Activated CD4-positive, alpha-beta T cell treated with anti-CD3 and anti-CD28 coated beads, Interleukin-2, amount 10 ng/mL, durations not matched to agents 24 days and 14 days (primary cell): ENCODE measurements at regions of chr12 and their contacts with region 1.

Region 1: DNA sequence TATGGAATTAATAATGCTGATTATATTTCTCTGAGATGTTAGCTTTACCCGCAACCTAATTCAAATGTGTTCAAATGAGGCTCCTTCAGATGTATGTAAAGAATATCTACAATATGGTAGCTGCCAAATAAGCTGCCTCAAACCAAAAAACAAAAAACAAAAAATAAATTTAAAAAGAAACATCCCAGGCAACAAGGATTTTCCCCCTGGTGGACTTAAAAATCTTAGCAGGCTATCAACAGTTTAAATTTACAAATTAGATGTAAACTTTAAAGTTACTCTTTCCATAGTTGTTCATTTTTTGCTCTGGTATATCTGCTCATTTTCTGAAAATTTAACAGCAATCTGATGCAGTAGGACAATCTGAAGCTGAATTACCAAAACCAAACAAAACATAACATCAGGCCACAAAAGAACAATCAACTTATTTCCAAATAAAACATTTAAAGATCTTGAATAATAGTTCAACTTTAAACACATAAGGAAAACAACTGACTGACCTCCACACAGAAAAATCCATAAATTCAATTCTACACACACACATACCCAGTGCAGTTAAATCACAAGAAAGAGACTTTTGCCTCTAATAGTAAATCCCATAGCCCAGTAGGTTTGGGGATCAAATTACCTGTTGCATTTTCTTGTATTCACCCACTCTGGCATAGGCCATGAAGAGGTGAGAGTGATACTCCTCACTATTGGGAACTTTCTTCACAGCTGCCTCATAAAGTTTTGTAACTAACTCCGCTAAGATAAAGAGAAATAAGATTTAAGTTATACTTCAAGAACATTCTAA is 21.3 kb downstream of the NAA25 start:
- DNase-seq: no peak
- H3K4me3 Mint-ChIP-seq: no peak overlapping the region
- H3K27ac Mint-ChIP-seq: no peak overlapping the region
- H3K4me1 Mint-ChIP-seq: peaks cover 21% of the 10 kb centered on the region
- H3K27me3 Mint-ChIP-seq: no peaks in the 10 kb centered on the region

Region 2: DNA sequence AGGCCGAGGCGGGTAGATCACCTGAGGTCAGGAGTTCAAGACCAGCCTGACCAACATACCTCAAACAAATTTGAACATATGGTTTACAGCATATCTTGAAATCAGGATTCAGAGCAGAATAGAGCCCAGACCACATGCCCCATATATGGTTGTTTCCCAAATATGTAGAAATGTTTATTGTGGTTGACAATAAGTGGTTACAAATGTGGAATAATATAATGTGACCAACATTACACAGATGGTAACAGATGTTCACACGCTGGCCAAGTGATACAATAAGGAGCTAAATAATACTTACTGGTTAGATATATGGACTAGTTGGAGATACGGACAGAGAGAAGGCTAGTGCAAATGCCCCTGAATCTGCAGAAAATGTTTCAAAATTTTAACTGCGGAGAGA is 159.9 kb before region 1 on chr12:
- intact Hi-C with region 1: no loop called
- DNase-seq: peak; percentile 22
- H3K4me3 Mint-ChIP-seq: no peak overlapping the region
- H3K27ac Mint-ChIP-seq: no peak overlapping the region
- H3K4me1 Mint-ChIP-seq: no peaks in the 10 kb centered on the region
- H3K27me3 Mint-ChIP-seq: no peaks in the 10 kb centered on the region

Region 3: GRCh38 chr12:112130441-112130998 is 43.3 kb after region 1 on chr12:
- intact Hi-C with region 1: loop called (anchors 2 kb)
- DNase-seq: peak; percentile 76
- H3K4me3 Mint-ChIP-seq: peak overlapping the region; percentile 78
- H3K27ac Mint-ChIP-seq: peak overlapping the region; percentile 85
- H3K4me1 Mint-ChIP-seq: peaks cover 44% of the 10 kb centered on the region
- H3K27me3 Mint-ChIP-seq: no peaks in the 10 kb centered on the region